ENCODE measurements at regions of chr1 and their contacts with region 1.

Region 1: GRCh38 chr1:42469727-42470126 is 6.6 kb downstream of the CCDC30 start:
- DNase-seq: no peak
- H3K4me3 ChIP-seq: no peak overlapping the region
- H3K27ac ChIP-seq: no peak overlapping the region
- H3K4me1 ChIP-seq: no peaks in the 10 kb centered on the region
- H3K27me3 ChIP-seq: no peaks in the 10 kb centered on the region
- CTCF ChIP-seq: no peak
- POLR2A ChIP-seq: no peak

Region 2: GRCh38 chr1:41274752-41275545 is 1194.8 kb before region 1 on chr1:
- intact Hi-C with region 1: no loop called
- DNase-seq: no peak
- H3K4me3 ChIP-seq: no peak overlapping the region
- H3K27ac ChIP-seq: no peak overlapping the region
- H3K4me1 ChIP-seq: no peaks in the 10 kb centered on the region
- H3K27me3 ChIP-seq: no peaks in the 10 kb centered on the region
- CTCF ChIP-seq: no peak
- POLR2A ChIP-seq: no peak

Region 3: GRCh38 chr1:41662061-41662764 is 807.5 kb before region 1 on chr1:
- intact Hi-C with region 1: loop called (anchors 5 kb)
- DNase-seq: peak in 1 of 2 donors; percentile 74
- H3K4me3 ChIP-seq: peak overlapping the region; percentile 63 to 89 (median 70)
- H3K27ac ChIP-seq: peak overlapping the region; percentile 97 to 98
- H3K4me1 ChIP-seq: peaks cover 9 to 17% of the 10 kb centered on the region in 2 donors
- H3K27me3 ChIP-seq: no peaks in the 10 kb centered on the region
- CTCF ChIP-seq: no peak
- POLR2A ChIP-seq: no peak

Region 4: GRCh38 chr1:42348498-42348897 is 121.2 kb before region 1 on chr1:
- intact Hi-C with region 1: loop called (anchors 5 kb)
- DNase-seq: no peak
- H3K4me3 ChIP-seq: no peak overlapping the region
- H3K27ac ChIP-seq: no peak overlapping the region
- H3K4me1 ChIP-seq: no peaks in the 10 kb centered on the region
- H3K27me3 ChIP-seq: no peaks in the 10 kb centered on the region
- CTCF ChIP-seq: no peak
- POLR2A ChIP-seq: no peak

Region 5: GRCh38 chr1:42490237-42490636 is 20.5 kb after region 1 on chr1:
- intact Hi-C with region 1: no loop called
- DNase-seq: no peak
- H3K4me3 ChIP-seq: no peak overlapping the region
- H3K27ac ChIP-seq: no peak overlapping the region
- H3K4me1 ChIP-seq: no peaks in the 10 kb centered on the region
- H3K27me3 ChIP-seq: no peaks in the 10 kb centered on the region
- CTCF ChIP-seq: no peak
- POLR2A ChIP-seq: no peak

Region 6: GRCh38 chr1:42639116-42639515 is 169.4 kb after region 1 on chr1:
- intact Hi-C with region 1: no loop called
- DNase-seq: no peak
- H3K4me3 ChIP-seq: no peak overlapping the region
- H3K27ac ChIP-seq: no peak overlapping the region
- H3K4me1 ChIP-seq: no peaks in the 10 kb centered on the region
- H3K27me3 ChIP-seq: no peaks in the 10 kb centered on the region
- CTCF ChIP-seq: no peak
- POLR2A ChIP-seq: no peak

Measured in breast epithelium (tissue), 4 donors.